CD4-positive, alpha-beta memory T cell (primary cell): ENCODE measurements at regions of chr14 and their contacts with region 1.

Region 1: GRCh38 chr14:59964251-59965007 is 44.5 kb downstream of the LRRC9 start:
- DNase-seq: peak in 1 of 5 donors; percentile 5
- H3K4me3 ChIP-seq: no peak overlapping the region
- H3K4me3 Mint-ChIP-seq: peak overlapping the region; percentile 77 to 98 (median 94)
- H3K27ac ChIP-seq: no peak overlapping the region
- H3K27ac Mint-ChIP-seq: peak overlapping the region in 5 of 7 donors; percentile 75 to 99 (median 99)
- H3K4me1 ChIP-seq: no peaks in the 10 kb centered on the region
- H3K4me1 Mint-ChIP-seq: peaks cover 0 to 13% (median 10%) of the 10 kb centered on the region in 4 donors
- H3K27me3 ChIP-seq: no peaks in the 10 kb centered on the region
- H3K27me3 Mint-ChIP-seq: peaks cover 2 to 3% of the 10 kb centered on the region in 2 donors

Region 2: DNA sequence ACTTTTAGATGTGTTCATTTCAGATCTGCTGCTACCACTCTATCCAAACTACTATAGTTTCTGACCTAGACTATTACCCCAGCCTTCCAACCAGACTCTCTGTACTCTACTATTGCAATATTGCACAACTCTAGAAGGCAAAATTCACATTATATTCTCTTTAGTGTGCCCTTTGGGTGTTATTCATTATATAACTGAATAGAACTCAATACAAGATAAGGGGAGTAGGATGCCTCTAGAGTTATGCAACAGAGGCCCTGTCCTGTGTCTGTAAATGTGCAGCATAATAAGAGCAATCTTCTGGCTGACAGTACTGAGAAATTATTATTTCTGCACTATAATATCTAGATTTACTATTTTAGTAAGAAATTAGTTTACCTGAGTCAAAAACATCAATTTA is 18.6 kb after region 1 on chr14:
- CTCF ChIA-PET with region 1: interaction called, 28 read pairs
- POLR2A ChIA-PET with region 1: interaction called, 3 read pairs
- intact Hi-C with region 1: no loop called
- DNase-seq: no peak
- H3K4me3 ChIP-seq: no peak overlapping the region
- H3K4me3 Mint-ChIP-seq: no peak overlapping the region
- H3K27ac ChIP-seq: no peak overlapping the region
- H3K27ac Mint-ChIP-seq: no peak overlapping the region
- H3K4me1 ChIP-seq: no peaks in the 10 kb centered on the region
- H3K4me1 Mint-ChIP-seq: no peaks in the 10 kb centered on the region
- H3K27me3 ChIP-seq: no peaks in the 10 kb centered on the region
- H3K27me3 Mint-ChIP-seq: no peaks in the 10 kb centered on the region

Region 3: GRCh38 chr14:60064491-60065072 is 100.2 kb after region 1 on chr14:
- CTCF ChIA-PET with region 1: interaction called, 33 read pairs
- POLR2A ChIA-PET with region 1: no interaction called
- intact Hi-C with region 1: loop called (anchors 1 kb)
- DNase-seq: peak in 4 of 5 donors; percentile 27 to 44 (median 39)
- H3K4me3 ChIP-seq: no peak overlapping the region
- H3K4me3 Mint-ChIP-seq: no peak overlapping the region
- H3K27ac ChIP-seq: no peak overlapping the region
- H3K27ac Mint-ChIP-seq: no peak overlapping the region
- H3K4me1 ChIP-seq: no peaks in the 10 kb centered on the region
- H3K4me1 Mint-ChIP-seq: no peaks in the 10 kb centered on the region
- H3K27me3 ChIP-seq: no peaks in the 10 kb centered on the region
- H3K27me3 Mint-ChIP-seq: peaks cover 0 to 14% of the 10 kb centered on the region in 2 donors